Left ventricle myocardium superior (tissue), 1 donor: ENCODE measurements at regions of chr7 and their contacts with region 1.

Region 1: DNA sequence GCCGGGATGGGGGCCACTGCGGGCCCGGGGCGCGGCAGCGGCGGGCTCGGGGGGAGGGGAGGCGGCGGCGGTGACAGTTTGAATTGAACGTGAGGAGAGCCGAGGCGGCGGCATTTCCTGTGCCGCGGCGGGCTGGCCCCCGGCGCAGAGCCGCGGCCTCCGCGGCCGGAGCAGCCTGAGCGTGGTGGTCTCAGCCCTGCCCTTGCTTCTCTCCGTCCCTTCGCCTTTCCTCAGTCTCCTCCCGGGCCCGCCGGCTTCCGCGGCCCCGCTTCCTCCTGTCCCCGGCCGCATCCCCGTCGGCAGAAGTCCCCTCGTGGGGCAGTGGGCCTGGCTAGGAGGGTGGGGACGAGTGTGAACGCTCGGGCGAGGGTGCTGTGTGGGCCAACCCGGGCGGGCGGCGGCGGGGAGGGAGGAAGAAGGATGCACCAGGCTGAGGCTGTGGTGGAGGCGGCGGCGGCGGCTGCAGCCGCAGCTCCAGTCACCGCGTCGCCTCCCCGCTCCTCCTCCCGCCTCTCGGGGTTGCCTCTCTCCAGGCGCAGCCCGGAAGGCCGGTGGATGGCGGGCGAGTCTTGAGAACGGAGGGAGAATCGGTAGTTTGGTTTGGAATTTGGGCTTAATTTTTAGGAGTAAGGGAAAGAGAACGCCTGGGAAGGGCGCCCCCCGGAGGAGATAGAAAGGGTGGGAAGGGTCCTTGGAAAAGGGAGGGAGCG is 690 bp downstream of the SEPTIN7 start:
- DNase-seq: peak; percentile 83
- ATAC-seq: peak; percentile 64

Region 2: DNA sequence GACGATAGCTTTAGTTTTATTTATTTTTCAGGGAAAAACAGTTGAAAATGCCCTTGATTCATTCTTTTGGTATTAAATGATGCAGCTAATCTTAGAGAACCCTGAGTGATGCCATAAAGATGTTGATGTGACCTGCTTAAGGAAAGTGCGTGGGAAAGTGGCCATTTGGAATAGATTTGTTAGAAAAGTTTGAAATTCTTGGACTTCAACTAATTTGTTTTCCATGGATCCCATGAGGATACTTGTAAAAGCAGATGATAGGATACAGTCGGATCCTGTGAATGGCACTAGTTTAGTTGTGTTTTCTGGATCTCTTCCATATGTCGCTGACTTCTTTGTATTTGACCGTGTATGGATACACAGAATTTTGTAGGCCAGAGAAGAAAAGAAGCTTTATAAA is 68.3 kb after region 1 on chr7:
- intact Hi-C with region 1: loop called (anchors 10 kb)
- DNase-seq: no peak
- ATAC-seq: peak; percentile 71

Region 3: DNA sequence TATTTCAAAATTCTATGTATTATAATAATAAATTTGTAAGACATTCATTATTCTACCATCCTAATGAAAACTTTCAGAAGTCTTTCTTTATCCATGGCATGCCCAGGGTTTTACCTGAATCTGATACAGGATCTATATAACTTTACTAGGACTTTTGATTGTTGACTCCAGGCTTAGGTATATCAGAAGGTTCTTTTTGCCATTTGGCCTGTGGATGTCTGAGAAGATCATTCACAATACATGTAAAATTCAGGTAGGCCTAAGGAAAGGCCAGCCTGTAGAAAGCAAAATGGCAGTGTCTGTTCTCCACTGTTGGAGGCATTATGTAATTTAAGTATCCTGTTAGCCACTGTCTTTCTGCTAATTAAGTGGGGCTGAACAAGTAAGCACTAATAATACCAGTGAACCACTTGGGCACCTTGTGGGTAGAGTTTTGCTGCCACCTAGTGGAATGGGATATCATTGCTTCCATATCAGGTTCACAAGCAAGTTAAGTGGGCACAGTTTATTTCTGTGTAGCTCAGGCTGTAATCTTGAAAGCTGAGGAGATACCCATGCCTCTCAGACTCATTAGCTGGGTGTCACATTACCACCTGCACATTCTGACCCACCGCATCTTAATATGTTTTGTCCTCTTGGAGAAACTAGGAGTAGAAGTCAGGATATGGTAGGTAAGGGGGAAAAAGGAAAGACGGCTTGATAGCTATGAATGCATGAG is 104.8 kb after region 1 on chr7:
- intact Hi-C with region 1: loop called (anchors 10 kb)
- DNase-seq: no peak
- ATAC-seq: peak; percentile 91